A549 (cell line): ENCODE measurements at regions of chr7 and their contacts with region 1.

Region 1: GRCh38 chr7:77331938-77332695 is 84.0 kb downstream of the GSAP start:
- DNase-seq: peak; percentile 74 to 81
- ATAC-seq: peak; percentile 97 to 99
- H3K4me3 ChIP-seq: no peak overlapping the region
- H3K27ac ChIP-seq: peak overlapping the region in 1 of 2 experiments; percentile 4; a peak in 1 of 6 replicates
- H3K4me1 ChIP-seq: peaks cover 11% of the 10 kb centered on the region; the same call in 2 of the 3 replicates
- CTCF ChIP-seq: peak; percentile 80
- EP300 ChIP-seq: no peak
- POLR2A ChIP-seq: no peak
- RAD21 ChIP-seq: peak; percentile 84 to 87

Region 2: DNA sequence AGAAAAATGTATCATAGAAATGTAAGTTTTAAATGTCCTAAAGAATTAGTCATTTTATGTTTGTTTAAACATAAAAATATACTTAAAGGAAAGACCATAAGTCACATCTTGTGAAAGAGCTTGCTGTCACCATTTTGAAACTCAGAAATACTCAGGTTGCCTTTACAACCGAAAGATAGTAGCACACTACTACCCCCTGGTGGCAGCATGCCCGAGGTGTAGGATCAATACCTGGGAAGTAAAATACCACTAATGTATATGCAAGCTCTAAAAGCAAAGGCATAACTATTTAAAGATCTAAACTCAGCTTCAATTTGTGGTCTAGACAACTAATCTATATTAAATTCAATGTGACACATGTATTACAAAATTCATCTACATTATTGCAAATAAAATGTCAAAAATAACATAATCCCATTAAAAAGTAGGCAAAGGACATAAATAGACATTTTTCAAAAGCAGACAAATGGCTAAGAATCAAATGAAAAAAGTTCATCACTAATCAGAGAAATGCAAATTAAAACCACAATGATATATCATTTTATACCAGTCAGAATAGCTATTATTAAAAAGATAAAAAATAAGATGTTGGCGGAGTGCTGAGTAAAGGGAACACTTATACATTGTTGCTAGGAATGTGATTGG is 84.8 kb before region 1 on chr7:
- CTCF ChIA-PET with region 1: interaction called, 12 read pairs
- POLR2A ChIA-PET with region 1: no interaction called
- DNase-seq: peak; percentile 55 to 82
- ATAC-seq: peak; percentile 80 to 91
- H3K4me3 ChIP-seq: no peak overlapping the region
- H3K27ac ChIP-seq: no peak overlapping the region
- H3K4me1 ChIP-seq: no peaks in the 10 kb centered on the region
- CTCF ChIP-seq: peak; percentile 87
- EP300 ChIP-seq: no peak
- POLR2A ChIP-seq: no peak
- RAD21 ChIP-seq: peak; percentile 79 to 83

Region 3: GRCh38 chr7:77321300-77321699 is 10.8 kb before region 1 on chr7:
- CTCF ChIA-PET with region 1: interaction called, 26 read pairs
- POLR2A ChIA-PET with region 1: no interaction called
- DNase-seq: no peak
- ATAC-seq: no peak
- H3K4me3 ChIP-seq: no peak overlapping the region
- H3K27ac ChIP-seq: no peak overlapping the region
- H3K4me1 ChIP-seq: peaks cover 4% of the 10 kb centered on the region; the same call in 2 of the 3 replicates
- CTCF ChIP-seq: no peak
- EP300 ChIP-seq: no peak
- POLR2A ChIP-seq: no peak
- RAD21 ChIP-seq: no peak

Region 4: GRCh38 chr7:77348371-77348813 is 16.3 kb after region 1 on chr7:
- CTCF ChIA-PET with region 1: interaction called, 13 read pairs
- POLR2A ChIA-PET with region 1: no interaction called
- DNase-seq: no peak
- ATAC-seq: peak; percentile 34 to 60; a peak in 3 of 6 replicates
- H3K4me3 ChIP-seq: no peak overlapping the region
- H3K27ac ChIP-seq: no peak overlapping the region
- H3K4me1 ChIP-seq: peaks cover 14% of the 10 kb centered on the region; the same call in 1 of the 3 replicates
- CTCF ChIP-seq: no peak
- EP300 ChIP-seq: no peak
- POLR2A ChIP-seq: no peak
- RAD21 ChIP-seq: no peak